Cardiac septum (tissue), 1 donor: ENCODE measurements at regions of chr5 and their contacts with region 1.

Region 1: DNA sequence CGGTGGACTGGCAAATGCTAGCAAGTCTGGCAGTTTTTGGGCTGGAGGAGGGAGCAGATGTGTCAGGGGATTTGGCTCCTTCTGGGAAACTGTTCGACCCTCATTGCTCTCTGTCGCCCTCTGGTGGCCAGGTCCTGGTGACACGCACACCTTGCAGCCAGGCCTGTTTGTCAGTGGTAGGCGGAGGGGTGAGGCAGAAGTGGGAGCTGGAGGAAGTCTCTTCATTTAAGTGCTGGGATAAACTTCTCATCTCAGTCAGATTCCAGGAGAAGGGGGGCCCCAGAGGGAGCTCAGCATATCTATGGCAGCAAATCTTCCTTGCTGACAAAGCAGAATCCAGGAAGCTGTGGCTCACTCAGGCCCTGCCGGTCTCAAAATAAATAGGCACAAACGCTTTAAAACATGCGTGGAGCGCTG is 326.5 kb downstream of the ZSWIM6 start:
- DNase-seq: peak; percentile 92

Region 2: GRCh38 chr5:61055434-61056006 is 603.1 kb before region 1 on chr5:
- intact Hi-C with region 1: loop called (anchors 2 kb)
- DNase-seq: no peak